Uterus (tissue), 4 donors: ENCODE measurements at regions of chr2 and their contacts with region 1.

Region 1: DNA sequence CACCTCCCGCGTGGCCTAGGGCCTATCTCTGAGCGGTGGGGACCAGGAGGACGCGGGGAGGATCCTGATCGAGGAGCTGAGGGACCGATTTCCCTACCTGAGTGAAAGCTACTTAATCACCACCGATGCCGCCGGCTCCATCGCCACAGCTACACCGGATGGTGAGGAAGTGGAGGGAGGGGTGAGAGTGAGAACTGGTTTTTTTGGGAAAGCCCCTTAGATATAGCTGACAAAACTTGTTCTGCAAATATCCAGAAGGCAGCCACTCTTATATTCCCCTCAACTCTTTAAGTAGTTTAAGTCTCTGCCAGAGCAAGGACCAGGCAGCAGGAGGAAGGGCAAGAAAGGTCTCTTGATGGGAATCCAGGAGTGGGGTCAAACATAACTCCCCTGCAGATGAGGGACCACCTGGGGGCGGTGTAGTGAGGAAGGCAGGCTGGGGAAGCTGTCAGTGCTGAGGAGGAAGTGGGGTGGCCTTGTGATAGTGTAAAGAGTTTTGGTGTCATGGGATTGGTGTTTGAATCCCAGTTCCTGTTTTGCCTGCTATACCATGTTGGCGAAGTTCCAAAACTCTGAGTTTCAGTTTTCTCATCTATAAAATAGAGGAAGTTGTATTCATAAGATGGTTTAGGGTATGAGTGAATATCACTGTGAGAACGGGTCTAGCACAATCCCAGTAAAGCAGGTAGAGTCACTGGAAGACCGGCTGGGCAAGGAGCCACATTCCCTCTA is 3.4 kb downstream of the NAGK start:
- DNase-seq: no peak
- H3K4me3 ChIP-seq: no peak overlapping the region
- H3K27ac ChIP-seq: peak overlapping the region in 1 of 2 donors; percentile 2
- H3K4me1 ChIP-seq: peaks cover 0 to 5% of the 10 kb centered on the region in 2 donors
- H3K27me3 ChIP-seq: no peaks in the 10 kb centered on the region
- CTCF ChIP-seq: no peak
- POLR2A ChIP-seq: no peak

Region 2: DNA sequence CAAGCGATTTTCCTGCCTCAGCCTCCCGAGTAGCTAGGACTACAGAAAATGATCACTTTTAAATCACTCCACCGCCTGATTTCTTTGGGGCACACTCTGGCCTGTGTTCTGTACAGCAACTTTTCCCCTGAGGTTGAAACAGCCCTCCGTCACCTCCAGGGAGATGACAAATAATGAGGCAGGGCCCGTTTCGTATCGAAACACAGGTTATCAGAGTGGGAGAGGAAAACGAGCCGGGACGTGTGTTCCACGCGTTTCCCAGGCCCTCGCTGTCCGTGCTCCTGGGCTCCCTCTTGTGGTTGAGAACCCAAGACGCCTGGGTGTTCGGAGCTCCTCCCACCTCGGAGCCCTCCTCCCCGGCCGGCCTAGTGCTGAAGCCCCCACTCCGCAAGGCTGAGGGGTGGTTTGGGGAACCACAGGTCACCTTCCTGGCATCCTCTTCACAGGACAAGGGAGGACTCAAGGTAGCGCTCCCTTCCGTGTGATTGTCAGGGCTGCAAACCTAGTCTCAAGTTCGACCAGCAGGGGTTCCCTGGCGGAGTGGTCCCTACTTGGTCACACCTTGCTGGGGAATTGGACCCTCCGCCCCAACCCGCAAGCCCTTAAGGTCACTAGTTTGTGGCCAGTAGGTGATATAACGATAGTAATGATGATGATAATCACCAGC is 123.4 kb before region 1 on chr2:
- intact Hi-C with region 1: no loop called
- DNase-seq: peak; percentile 77 to 79
- H3K4me3 ChIP-seq: peak overlapping the region; percentile 13 to 29
- H3K27ac ChIP-seq: no peak overlapping the region
- H3K4me1 ChIP-seq: no peaks in the 10 kb centered on the region
- H3K27me3 ChIP-seq: no peaks in the 10 kb centered on the region
- CTCF ChIP-seq: peak; percentile 69 to 75 (median 72)
- POLR2A ChIP-seq: no peak

Region 3: DNA sequence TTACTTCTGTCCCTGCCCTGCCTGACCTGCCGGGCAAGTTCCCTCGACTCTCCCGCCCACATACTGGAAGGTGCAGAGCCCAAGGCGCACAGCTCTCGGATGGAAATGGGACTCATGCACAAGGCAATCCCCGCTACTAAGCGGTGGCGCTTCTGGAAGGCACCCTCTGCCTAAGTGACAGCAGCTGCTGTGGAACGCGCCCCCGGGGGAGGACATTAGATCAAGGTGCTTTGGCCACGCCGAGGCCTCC is 58.0 kb after region 1 on chr2:
- intact Hi-C with region 1: loop called (anchors 10 kb)
- DNase-seq: no peak
- H3K4me3 ChIP-seq: peak overlapping the region; percentile 90 to 99
- H3K27ac ChIP-seq: peak overlapping the region; percentile 88 to 93
- H3K4me1 ChIP-seq: peaks cover 6 to 11% of the 10 kb centered on the region in 2 donors
- H3K27me3 ChIP-seq: no peaks in the 10 kb centered on the region
- CTCF ChIP-seq: no peak
- POLR2A ChIP-seq: no peak

Region 4: GRCh38 chr2:71667256-71668182 is 595.7 kb after region 1 on chr2:
- intact Hi-C with region 1: no loop called
- DNase-seq: no peak
- H3K4me3 ChIP-seq: no peak overlapping the region
- H3K27ac ChIP-seq: no peak overlapping the region
- H3K4me1 ChIP-seq: no peaks in the 10 kb centered on the region
- H3K27me3 ChIP-seq: no peaks in the 10 kb centered on the region
- CTCF ChIP-seq: no peak
- POLR2A ChIP-seq: no peak